CD14-positive monocyte (primary cell): ENCODE measurements at regions of chr7 and their contacts with region 1.

Region 1: DNA sequence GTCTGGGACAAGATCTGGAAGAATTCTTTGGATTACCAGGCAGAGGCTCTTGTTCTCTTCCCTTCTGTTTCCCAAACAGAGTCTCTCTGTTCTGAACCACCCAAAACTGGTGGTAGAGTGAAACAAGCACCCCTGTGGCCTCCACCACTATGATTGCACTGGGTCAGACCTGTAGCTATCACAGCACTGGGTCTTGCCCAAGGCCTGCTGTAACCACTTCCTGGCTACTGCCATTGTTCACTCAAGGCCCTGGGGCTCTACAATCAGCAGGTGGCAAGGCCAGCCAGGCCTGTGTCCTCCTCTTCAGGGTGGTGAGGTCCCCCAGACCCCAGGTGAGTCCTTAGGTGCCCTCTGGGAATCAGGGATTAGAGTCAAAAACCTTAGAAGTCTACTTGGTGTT is 4.1 kb upstream of the LRRC17 start:
- DNase-seq: no peak
- H3K4me3 ChIP-seq: no peak overlapping the region
- H3K4me3 Mint-ChIP-seq: no peak overlapping the region
- H3K27ac ChIP-seq: no peak overlapping the region
- H3K27ac Mint-ChIP-seq: peak overlapping the region in 1 of 7 donors; percentile 56
- H3K4me1 ChIP-seq: peaks cover 12 to 14% of the 10 kb centered on the region in 2 donors
- H3K4me1 Mint-ChIP-seq: peaks cover 24% of the 10 kb centered on the region
- H3K27me3 ChIP-seq: no peaks in the 10 kb centered on the region
- H3K27me3 Mint-ChIP-seq: peaks cover 0 to 2% (median 0%) of the 10 kb centered on the region in 3 donors
- CTCF ChIP-seq: no peak

Region 2: GRCh38 chr7:102978280-102978679 is 69.6 kb after region 1 on chr7:
- intact Hi-C with region 1: loop called in 1 of 2 experiments (anchors 5 kb)
- DNase-seq: peak; percentile 27 to 65 (median 44)
- H3K4me3 ChIP-seq: no peak overlapping the region
- H3K4me3 Mint-ChIP-seq: no peak overlapping the region
- H3K27ac ChIP-seq: no peak overlapping the region
- H3K27ac Mint-ChIP-seq: peak overlapping the region in 5 of 7 donors; percentile 7 to 72 (median 41)
- H3K4me1 ChIP-seq: peaks cover 6% of the 10 kb centered on the region in 2 donors
- H3K4me1 Mint-ChIP-seq: peaks cover 16% of the 10 kb centered on the region
- H3K27me3 ChIP-seq: no peaks in the 10 kb centered on the region
- H3K27me3 Mint-ChIP-seq: peaks cover 0 to 2% (median 0%) of the 10 kb centered on the region in 3 donors
- CTCF ChIP-seq: no peak